ENCODE measurements at regions of chr12 and their contacts with region 1.

Region 1: GRCh38 chr12:70576346-70577282 is 60.6 kb downstream of the PTPRB start:
- DNase-seq: no peak
- ATAC-seq: peak; percentile 72 to 85
- H3K4me3 ChIP-seq: no peak overlapping the region
- H3K27ac ChIP-seq: peak overlapping the region in 3 of 4 donors; percentile 41 to 49 (median 44)
- H3K4me1 ChIP-seq: no peaks in the 10 kb centered on the region
- H3K27me3 ChIP-seq: no peaks in the 10 kb centered on the region
- CTCF ChIP-seq: peak; percentile 63 to 75 (median 64)
- POLR2A ChIP-seq: no peak

Region 2: GRCh38 chr12:69879041-69879960 is 697.3 kb before region 1 on chr12:
- in situ Hi-C with region 1: loop called in 3 of 4 experiments (anchors 5 to 10 kb)
- intact Hi-C with region 1: loop called (anchors 1 kb)
- DNase-seq: peak; percentile 34 to 42
- ATAC-seq: peak; percentile 87 to 88
- H3K4me3 ChIP-seq: peak overlapping the region in 3 of 4 donors; percentile 24 to 48 (median 29)
- H3K27ac ChIP-seq: no peak overlapping the region
- H3K4me1 ChIP-seq: peaks cover 0 to 4% of the 10 kb centered on the region in 2 donors
- H3K27me3 ChIP-seq: no peaks in the 10 kb centered on the region
- CTCF ChIP-seq: peak; percentile 59 to 88 (median 80)
- POLR2A ChIP-seq: no peak

Region 3: DNA sequence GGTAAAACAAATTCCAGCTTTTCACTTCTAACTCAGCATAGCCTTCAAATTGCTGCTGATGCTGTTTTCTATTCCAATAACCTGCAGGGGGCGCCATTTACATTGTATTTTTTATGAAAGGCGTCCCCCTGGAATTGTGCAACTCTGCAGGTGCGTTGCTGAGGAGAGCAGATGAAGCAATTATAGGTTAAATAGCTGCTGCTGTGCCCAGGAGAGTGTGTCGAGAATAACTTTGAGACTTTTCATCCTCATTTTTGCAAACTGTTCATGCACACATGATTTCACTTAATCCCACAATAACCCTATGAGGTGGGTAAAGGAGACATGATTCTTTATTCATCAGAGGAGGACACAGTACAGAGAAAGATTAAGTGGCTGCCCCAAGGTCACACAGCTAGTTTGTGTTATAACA is 675.9 kb before region 1 on chr12:
- in situ Hi-C with region 1: loop called in 1 of 4 experiments (anchors 10 kb)
- intact Hi-C with region 1: loop called (anchors 2 kb)
- DNase-seq: peak; percentile 47 to 58
- ATAC-seq: peak; percentile 41 to 79
- H3K4me3 ChIP-seq: no peak overlapping the region
- H3K27ac ChIP-seq: no peak overlapping the region
- H3K4me1 ChIP-seq: no peaks in the 10 kb centered on the region
- H3K27me3 ChIP-seq: no peaks in the 10 kb centered on the region
- CTCF ChIP-seq: peak; percentile 65 to 77 (median 75)
- POLR2A ChIP-seq: no peak

Region 4: GRCh38 chr12:70719672-70720420 is 143.2 kb after region 1 on chr12:
- in situ Hi-C with region 1: loop called in 2 of 4 experiments (anchors 10 kb)
- intact Hi-C with region 1: no loop called
- DNase-seq: peak in 1 of 2 donors; percentile 13
- ATAC-seq: peak; percentile 32 to 37
- H3K4me3 ChIP-seq: peak overlapping the region; percentile 17 to 32 (median 26)
- H3K27ac ChIP-seq: peak overlapping the region; percentile 39 to 68 (median 52)
- H3K4me1 ChIP-seq: peaks cover 0 to 6% of the 10 kb centered on the region in 2 donors
- H3K27me3 ChIP-seq: no peaks in the 10 kb centered on the region
- CTCF ChIP-seq: peak; percentile 61 to 83 (median 70)
- POLR2A ChIP-seq: no peak

Region 5: DNA sequence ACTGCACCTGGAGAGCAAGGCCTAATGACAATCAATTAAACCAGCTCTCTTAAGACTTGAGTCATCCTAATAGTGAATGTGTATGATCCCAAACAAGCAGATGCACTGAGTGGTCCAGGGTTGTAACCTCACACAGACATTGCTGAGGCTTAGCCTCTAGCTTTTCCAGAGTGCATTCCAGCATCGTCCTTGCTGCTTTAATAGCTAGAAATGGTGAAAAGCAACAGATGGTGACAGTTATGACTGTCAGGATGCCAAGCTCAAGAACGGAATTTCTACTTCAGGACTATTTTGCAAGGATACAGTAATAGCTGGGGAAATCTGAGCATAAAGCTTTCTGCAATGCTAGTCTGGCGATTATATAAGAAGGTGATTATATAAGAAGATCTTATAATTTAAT is 309.3 kb after region 1 on chr12:
- in situ Hi-C with region 1: no loop called
- intact Hi-C with region 1: no loop called
- DNase-seq: no peak
- ATAC-seq: no peak
- H3K4me3 ChIP-seq: no peak overlapping the region
- H3K27ac ChIP-seq: no peak overlapping the region
- H3K4me1 ChIP-seq: no peaks in the 10 kb centered on the region
- H3K27me3 ChIP-seq: no peaks in the 10 kb centered on the region
- CTCF ChIP-seq: no peak
- POLR2A ChIP-seq: no peak

Measured in gastrocnemius medialis (tissue), 4 donors.